Head of caudate nucleus (tissue), 42 donors: ENCODE measurements at regions of chr5 and their contacts with region 1.

Region 1: DNA sequence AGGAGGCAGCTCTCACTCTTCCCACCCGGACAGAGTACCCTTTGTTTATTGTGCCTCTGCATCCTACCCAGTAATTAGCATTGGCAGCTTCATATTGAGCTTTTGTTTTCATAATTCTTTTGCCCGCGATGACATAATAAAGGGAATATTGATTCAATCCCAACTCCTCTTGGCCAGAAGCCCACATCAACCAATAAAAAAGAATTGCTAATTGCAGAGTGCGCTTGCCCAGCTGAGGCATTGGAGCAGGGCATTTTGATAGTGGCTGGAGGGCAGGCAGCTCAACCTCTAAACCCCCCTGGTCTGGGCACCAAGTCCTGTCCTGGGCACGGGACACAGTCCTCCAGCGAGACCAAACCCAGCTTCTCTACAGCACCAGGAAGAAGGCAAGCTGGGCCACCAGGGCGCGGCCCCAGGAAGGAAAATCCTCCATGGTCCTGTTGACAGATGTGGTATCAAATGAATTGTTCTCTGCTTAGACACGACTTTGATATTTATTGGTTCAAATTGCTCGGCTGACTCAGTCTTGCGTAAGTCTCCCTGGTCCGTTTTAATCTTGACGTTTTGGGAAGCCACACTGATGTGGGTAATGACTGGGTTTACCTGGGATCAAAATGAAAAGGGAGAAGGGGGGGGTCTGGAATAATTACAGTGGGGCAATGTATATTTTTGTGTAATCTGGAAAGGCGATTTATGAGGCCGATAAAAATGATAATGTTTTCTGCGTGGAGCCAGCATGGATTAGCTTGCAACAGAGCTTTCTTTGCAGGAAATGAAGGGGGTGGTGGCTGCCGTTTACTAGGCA is 220.7 kb upstream of the MSX2 start:
- DNase-seq: peak; percentile 30 to 93 (median 71)

Region 2: GRCh38 chr5:174424219-174425053 is 79.2 kb before region 1 on chr5:
- intact Hi-C with region 1: loop called (anchors 10 kb)
- DNase-seq: peak in 41 of 42 donors; percentile 19 to 84 (median 60)

Region 3: DNA sequence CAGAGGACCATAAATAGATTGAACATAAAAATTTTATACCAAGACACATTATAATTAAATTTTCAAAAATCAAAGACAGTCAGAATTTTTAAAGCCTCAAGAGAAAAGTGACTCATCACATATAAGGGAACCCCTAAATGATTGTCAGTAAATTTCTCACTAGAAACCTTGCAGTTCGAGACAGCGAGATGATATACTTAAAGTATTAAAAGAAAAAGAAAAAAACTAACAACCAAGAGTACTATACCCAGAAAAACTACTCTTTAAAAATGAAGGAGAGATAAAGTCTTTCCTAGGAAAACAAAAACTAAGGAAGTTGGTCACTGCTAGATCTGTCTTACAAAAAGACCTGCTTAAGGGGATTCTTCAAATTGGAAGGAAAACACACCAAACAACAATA is 30.7 kb before region 1 on chr5:
- intact Hi-C with region 1: no loop called
- DNase-seq: no peak

Region 4: GRCh38 chr5:174547814-174548213 is 44.2 kb after region 1 on chr5:
- intact Hi-C with region 1: no loop called
- DNase-seq: no peak